ENCODE measurements at regions of chr5 and their contacts with region 1.

Region 1: GRCh38 chr5:95961617-95962474 is at the start of gene ELL2:
- DNase-seq: peak; percentile 99
- ATAC-seq: peak; percentile 90
- H3K4me3 Mint-ChIP-seq: peak within 1 kb of the TSS; percentile 96
- H3K27ac Mint-ChIP-seq: peak within 1 kb of the TSS; percentile 98
- H3K4me1 Mint-ChIP-seq: peaks cover 42% of the 10 kb centered on the region
- H3K27me3 Mint-ChIP-seq: no peaks in the 10 kb centered on the region
- total RNA-seq, gene ELL2: 33.9 to 81.8 TPM

Region 2: DNA sequence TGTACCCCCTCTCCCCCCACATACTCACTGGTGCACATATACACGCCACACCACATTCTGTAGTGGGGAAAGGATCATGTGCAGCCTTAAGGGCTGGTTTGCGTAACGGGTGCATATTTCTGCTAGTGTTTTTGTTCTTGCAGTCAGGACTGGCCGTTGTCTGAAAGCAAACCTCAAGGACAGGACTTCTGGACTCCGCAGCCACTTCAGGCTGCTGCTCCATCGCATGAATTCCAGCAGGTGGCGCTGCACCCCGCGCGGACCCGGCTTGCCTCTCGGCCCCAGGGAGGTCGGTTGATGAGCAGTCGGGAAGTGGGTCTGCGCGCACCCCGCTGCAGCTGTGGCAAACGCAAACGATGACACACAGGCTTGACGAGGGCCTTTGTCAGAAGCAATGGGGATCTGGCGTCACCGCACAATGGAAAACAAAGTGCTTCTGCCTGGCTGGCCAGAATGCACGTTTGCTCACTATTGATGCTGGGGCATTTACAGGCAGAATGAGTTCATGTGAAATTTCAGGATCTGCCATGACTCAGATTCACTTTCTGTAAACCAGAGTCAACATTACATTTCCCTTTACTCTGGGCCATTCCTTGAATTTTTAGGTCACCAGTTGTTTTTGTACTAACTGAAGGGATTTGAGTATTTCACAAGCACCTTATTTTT is 103.1 kb before region 1 on chr5:
- CTCF ChIA-PET with region 1: interaction called, 15 read pairs
- DNase-seq: peak; percentile 94
- ATAC-seq: peak; percentile 95
- H3K4me3 Mint-ChIP-seq: peak overlapping the region; percentile 53
- H3K27ac Mint-ChIP-seq: peak overlapping the region; percentile 37
- H3K4me1 Mint-ChIP-seq: peaks cover 44% of the 10 kb centered on the region
- H3K27me3 Mint-ChIP-seq: no peaks in the 10 kb centered on the region

Region 3: GRCh38 chr5:95949810-95950209 is 12.0 kb before region 1 on chr5:
- CTCF ChIA-PET with region 1: interaction called, 47 read pairs
- DNase-seq: no peak
- ATAC-seq: peak; percentile 66
- H3K4me3 Mint-ChIP-seq: peak overlapping the region; percentile 31
- H3K27ac Mint-ChIP-seq: peak overlapping the region; percentile 53
- H3K4me1 Mint-ChIP-seq: peaks cover 39% of the 10 kb centered on the region
- H3K27me3 Mint-ChIP-seq: no peaks in the 10 kb centered on the region

Region 4: DNA sequence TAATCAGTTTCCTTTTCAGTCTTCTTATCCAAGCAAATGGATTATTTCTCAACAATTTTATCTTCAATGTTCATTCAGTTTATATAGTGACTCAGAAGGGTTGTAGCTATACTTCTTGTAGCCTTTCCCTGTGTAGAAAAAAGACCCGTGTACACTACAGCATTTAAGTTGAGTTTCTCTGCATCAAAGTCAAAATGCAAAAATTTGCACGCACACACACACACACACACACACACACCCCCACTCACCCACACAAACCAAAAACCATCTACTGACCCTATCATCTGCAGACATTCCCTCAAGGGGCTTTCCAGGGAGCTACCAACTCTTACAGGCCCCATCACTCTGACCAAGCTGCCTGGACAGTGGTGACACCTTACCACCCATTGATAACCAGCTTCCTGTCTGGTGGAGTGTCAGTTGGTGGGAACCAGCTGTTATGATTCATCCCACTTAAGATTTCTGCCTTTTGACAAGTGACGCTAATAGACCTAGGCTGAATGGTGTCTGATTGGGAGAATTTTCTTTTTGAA is 12.0 kb after region 1 on chr5:
- CTCF ChIA-PET with region 1: interaction called, 15 read pairs
- DNase-seq: peak; percentile 79
- ATAC-seq: peak; percentile 93
- H3K4me3 Mint-ChIP-seq: peak overlapping the region; percentile 4
- H3K27ac Mint-ChIP-seq: peak overlapping the region; percentile 79
- H3K4me1 Mint-ChIP-seq: peaks cover 28% of the 10 kb centered on the region
- H3K27me3 Mint-ChIP-seq: peaks cover 6% of the 10 kb centered on the region

Region 5: DNA sequence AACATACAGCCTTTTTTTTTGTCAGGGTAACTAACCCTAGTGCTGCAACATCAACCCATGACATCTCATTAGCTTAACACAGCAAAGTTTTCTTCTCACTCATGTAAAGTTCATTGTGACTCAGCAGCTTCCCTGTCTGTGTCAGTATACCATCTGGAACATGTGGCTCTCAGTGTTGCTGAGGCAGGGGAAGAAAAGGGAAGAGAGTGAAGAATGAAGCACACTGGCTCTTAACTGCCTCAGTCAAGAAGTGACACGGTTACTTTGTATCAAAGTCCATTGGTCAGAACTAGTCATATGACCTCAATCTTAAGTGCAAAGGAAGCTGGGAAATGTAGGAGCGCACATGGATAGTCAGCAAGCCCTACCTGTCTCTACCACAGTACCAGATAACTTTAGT is 184.8 kb after region 1 on chr5:
- CTCF ChIA-PET with region 1: no interaction called
- DNase-seq: no peak
- ATAC-seq: no peak
- H3K4me3 Mint-ChIP-seq: no peak overlapping the region
- H3K27ac Mint-ChIP-seq: no peak overlapping the region
- H3K4me1 Mint-ChIP-seq: peaks cover 3% of the 10 kb centered on the region
- H3K27me3 Mint-ChIP-seq: peaks cover 6% of the 10 kb centered on the region

Measured in activated CD8-positive, alpha-beta memory T cell treated with anti-CD3 and anti-CD28 coated beads, Interleukin-2, amount 10 ng/mL, durations not matched to agents 7 days and 5 days (primary cell).